MCF 10A (cell line): ENCODE measurements at regions of chr6 and their contacts with region 1.

Region 1: DNA sequence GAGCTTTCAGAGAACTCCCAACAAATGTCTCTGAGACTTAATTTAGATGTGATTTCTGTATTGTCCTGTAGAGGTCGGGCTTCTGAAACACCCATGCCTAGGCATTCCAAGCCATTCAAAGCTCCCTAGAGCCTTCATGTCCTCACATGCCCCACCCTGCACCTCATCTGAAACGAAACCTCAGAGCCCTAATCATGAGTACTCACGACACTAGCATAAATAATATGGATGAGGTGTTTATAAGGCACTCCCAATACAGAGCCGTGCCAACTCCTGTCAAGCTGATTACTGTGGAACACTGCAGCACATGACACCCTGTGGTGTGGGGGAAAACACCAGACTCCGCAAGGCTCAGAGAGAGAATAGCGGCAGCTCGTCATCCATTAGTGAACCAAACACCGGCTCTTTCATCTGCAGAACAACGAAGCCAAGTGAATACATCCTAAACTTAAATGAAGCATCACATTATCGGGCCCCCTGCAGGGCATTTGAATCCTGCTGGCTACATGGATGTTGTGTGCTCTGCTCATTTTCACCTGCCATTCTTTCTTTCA is 83.8 kb downstream of the FNDC1 start:
- DNase-seq: peak; percentile 74
- H3K4me3 Mint-ChIP-seq: no peak overlapping the region
- H3K27ac Mint-ChIP-seq: no peak overlapping the region
- H3K4me1 Mint-ChIP-seq: peaks cover 6% of the 10 kb centered on the region
- H3K27me3 Mint-ChIP-seq: no peaks in the 10 kb centered on the region
- CTCF ChIP-seq: peak; percentile 49

Region 2: GRCh38 chr6:158863646-158864045 is 389.4 kb before region 1 on chr6:
- CTCF ChIA-PET with region 1: no interaction called
- POLR2A ChIA-PET with region 1: no interaction called
- intact Hi-C with region 1: no loop called
- DNase-seq: no peak
- H3K4me3 Mint-ChIP-seq: no peak overlapping the region
- H3K27ac Mint-ChIP-seq: no peak overlapping the region
- H3K4me1 Mint-ChIP-seq: no peaks in the 10 kb centered on the region
- H3K27me3 Mint-ChIP-seq: no peaks in the 10 kb centered on the region
- CTCF ChIP-seq: no peak

Region 3: GRCh38 chr6:159174263-159174969 is 78.6 kb before region 1 on chr6:
- CTCF ChIA-PET with region 1: interaction called, 5 read pairs
- POLR2A ChIA-PET with region 1: interaction called, 3 read pairs
- intact Hi-C with region 1: loop called (anchors 5 kb)
- DNase-seq: peak; percentile 69
- H3K4me3 Mint-ChIP-seq: no peak overlapping the region
- H3K27ac Mint-ChIP-seq: no peak overlapping the region
- H3K4me1 Mint-ChIP-seq: peaks cover 8% of the 10 kb centered on the region
- H3K27me3 Mint-ChIP-seq: peaks cover 51% of the 10 kb centered on the region
- CTCF ChIP-seq: peak; percentile 96

Region 4: GRCh38 chr6:159238920-159239558 is 14.0 kb before region 1 on chr6:
- CTCF ChIA-PET with region 1: interaction called, 27 read pairs
- POLR2A ChIA-PET with region 1: interaction called, 3 read pairs
- intact Hi-C with region 1: no loop called
- DNase-seq: no peak
- H3K4me3 Mint-ChIP-seq: no peak overlapping the region
- H3K27ac Mint-ChIP-seq: no peak overlapping the region
- H3K4me1 Mint-ChIP-seq: no peaks in the 10 kb centered on the region
- H3K27me3 Mint-ChIP-seq: peaks cover 58% of the 10 kb centered on the region
- CTCF ChIP-seq: no peak

Region 5: GRCh38 chr6:159279790-159280277 is 26.8 kb after region 1 on chr6:
- CTCF ChIA-PET with region 1: interaction called, 10 read pairs
- POLR2A ChIA-PET with region 1: interaction called, 3 read pairs
- intact Hi-C with region 1: no loop called
- DNase-seq: peak; percentile 82
- H3K4me3 Mint-ChIP-seq: no peak overlapping the region
- H3K27ac Mint-ChIP-seq: no peak overlapping the region
- H3K4me1 Mint-ChIP-seq: peaks cover 16% of the 10 kb centered on the region
- H3K27me3 Mint-ChIP-seq: peaks cover 15% of the 10 kb centered on the region
- CTCF ChIP-seq: no peak

Region 6: GRCh38 chr6:159463119-159463829 is 210.2 kb after region 1 on chr6:
- CTCF ChIA-PET with region 1: interaction called, 7 read pairs
- POLR2A ChIA-PET with region 1: no interaction called
- intact Hi-C with region 1: loop called (anchors 10 kb)
- DNase-seq: peak; percentile 49
- H3K4me3 Mint-ChIP-seq: no peak overlapping the region
- H3K27ac Mint-ChIP-seq: no peak overlapping the region
- H3K4me1 Mint-ChIP-seq: peaks cover 6% of the 10 kb centered on the region
- H3K27me3 Mint-ChIP-seq: peaks cover 18% of the 10 kb centered on the region
- CTCF ChIP-seq: peak; percentile 38

Region 7: GRCh38 chr6:159608961-159609651 is 356.1 kb after region 1 on chr6:
- CTCF ChIA-PET with region 1: interaction called, 15 read pairs
- POLR2A ChIA-PET with region 1: no interaction called
- intact Hi-C with region 1: loop called (anchors 1 kb)
- DNase-seq: peak; percentile 66
- H3K4me3 Mint-ChIP-seq: no peak overlapping the region
- H3K27ac Mint-ChIP-seq: no peak overlapping the region
- H3K4me1 Mint-ChIP-seq: no peaks in the 10 kb centered on the region
- H3K27me3 Mint-ChIP-seq: no peaks in the 10 kb centered on the region
- CTCF ChIP-seq: peak; percentile 92

Region 8: DNA sequence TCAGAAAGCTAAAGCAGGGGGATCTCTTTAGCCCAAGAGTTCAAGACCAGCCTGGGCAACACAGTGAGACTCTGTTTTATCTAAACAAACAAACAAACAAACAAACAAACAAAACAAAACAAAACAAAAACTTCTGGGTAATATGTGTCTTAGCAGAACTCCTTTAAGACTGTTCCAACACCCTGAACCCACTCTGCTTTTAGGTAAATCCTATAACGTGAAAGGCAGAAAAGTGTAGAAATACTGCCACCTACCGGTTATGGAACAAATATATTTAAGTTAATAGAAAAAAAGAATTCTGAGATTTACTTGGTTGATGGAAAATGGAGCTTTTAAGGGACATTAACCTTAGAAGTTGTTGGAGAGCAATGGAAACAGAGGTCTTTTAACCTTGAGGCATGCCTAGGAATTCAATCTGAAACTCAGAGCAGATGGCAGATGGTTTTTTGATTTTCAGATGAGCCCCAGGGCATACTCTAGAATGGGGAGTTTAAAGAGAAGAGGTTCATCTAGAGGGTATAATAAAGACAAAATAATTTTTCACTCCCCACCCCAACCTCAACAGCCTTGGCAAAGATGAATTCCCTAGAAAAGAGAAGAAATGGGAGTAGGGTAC is 401.6 kb after region 1 on chr6:
- CTCF ChIA-PET with region 1: interaction called, 35 read pairs
- POLR2A ChIA-PET with region 1: no interaction called
- intact Hi-C with region 1: loop called (anchors 2 kb)
- DNase-seq: peak; percentile 71
- H3K4me3 Mint-ChIP-seq: no peak overlapping the region
- H3K27ac Mint-ChIP-seq: no peak overlapping the region
- H3K4me1 Mint-ChIP-seq: peaks cover 5% of the 10 kb centered on the region
- H3K27me3 Mint-ChIP-seq: no peaks in the 10 kb centered on the region
- CTCF ChIP-seq: peak; percentile 54